Activated CD4-positive, alpha-beta memory T cell treated with anti-CD3 and anti-CD28 coated beads, Interleukin-2, amount 10 ng/mL, durations not matched to agents 7 days and 5 days (primary cell): ENCODE measurements at regions of chr1 and their contacts with region 1.

Region 1: DNA sequence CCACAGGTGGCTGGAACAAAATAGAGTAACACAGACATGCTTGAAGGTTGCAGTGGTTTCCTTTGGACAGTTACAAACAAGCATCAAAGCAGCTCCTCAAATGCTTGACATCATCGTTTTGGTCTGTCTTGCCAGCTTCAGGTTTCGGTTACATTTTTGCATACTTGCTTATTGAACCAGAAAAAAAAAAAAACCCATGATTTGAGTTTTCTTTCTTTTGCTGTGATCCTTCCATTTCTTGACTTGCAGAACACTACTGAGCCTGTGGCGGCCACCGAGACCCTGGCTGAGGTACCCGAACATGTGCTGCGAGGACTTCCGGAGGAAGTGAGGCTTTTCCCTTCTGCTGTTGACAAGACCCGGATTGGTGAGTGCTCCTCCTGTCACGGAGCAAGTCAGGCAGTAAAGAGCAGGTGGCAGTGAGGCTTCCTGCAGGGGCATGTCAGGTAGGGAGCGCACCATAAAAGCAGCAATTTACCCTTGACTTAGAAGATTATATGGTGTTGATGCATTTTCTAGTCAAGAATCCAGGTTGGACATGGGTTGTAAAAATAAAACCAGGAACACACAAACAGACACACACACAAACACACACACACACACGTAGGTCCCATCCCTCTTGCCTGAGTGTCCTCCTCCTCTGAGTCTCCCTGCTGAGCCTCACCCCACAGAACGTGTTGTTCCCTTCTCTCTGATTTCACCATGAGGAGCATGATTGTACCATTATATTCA is 30.9 kb downstream of the PRDM2 start:
- DNase-seq: peak; percentile 88
- H3K4me3 Mint-ChIP-seq: peak overlapping the region; percentile 77
- H3K27ac Mint-ChIP-seq: peak overlapping the region; percentile 99
- H3K4me1 Mint-ChIP-seq: peaks cover 69% of the 10 kb centered on the region
- H3K27me3 Mint-ChIP-seq: no peaks in the 10 kb centered on the region

Region 2: GRCh38 chr1:13699936-13700520 is 30.9 kb before region 1 on chr1 and contains the start of gene PRDM2:
- CTCF ChIA-PET with region 1: interaction called, 24 read pairs
- POLR2A ChIA-PET with region 1: interaction called, 59 read pairs
- DNase-seq: peak; percentile 64
- H3K4me3 Mint-ChIP-seq: peak within 1 kb of the TSS; percentile 94
- H3K27ac Mint-ChIP-seq: peak within 1 kb of the TSS; percentile 95
- H3K4me1 Mint-ChIP-seq: peaks cover 44% of the 10 kb centered on the region
- H3K27me3 Mint-ChIP-seq: peaks cover 2% of the 10 kb centered on the region
- total RNA-seq, gene PRDM2: 56.3 to 58.4 TPM

Region 3: DNA sequence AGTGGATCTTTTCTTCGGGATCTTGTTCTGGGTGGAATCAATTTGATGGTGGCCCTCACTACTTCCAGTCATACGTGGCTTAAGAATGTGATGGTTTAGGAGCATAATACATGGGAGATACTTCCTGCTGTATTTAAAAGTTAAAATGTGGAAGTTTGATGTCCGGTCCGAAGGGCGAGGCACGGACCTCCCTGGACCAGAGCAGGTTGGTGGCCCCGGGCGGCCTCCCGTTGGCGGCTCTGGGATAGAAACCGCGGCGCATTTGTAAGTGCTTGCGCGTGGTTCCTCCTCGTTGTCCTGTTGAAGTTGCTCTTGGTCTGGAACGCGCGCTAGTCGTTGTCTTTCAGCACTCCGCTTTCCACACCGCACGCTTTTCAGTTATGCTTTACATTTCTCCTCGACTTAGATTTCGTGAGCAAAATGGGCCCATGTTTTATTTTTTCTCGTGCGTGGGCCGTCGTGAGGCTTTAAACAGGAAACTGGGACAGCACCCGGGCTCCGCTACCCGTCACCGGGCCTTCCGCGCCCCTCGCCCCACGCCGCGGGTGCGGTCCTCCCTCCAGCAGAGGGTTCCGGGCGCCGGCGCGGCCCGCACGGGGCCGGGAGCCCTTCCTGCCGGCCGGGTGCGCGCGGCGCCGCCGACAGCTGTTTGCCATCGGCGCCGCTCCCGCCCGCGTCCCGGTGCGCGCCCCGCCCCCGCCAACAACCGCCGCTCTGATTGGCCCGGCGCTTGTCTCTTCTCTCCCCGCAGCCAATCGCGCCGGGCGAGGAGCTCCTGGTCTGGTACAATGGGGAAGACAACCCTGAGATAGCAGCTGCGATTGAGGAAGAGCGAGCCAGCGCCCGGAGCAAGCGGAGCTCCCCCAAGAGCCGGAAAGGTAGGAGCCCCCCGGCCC is 17.9 kb after region 1 on chr1:
- CTCF ChIA-PET with region 1: interaction called, 47 read pairs
- POLR2A ChIA-PET with region 1: interaction called, 177 read pairs
- DNase-seq: peak; percentile 96
- H3K4me3 Mint-ChIP-seq: peak overlapping the region; percentile 86
- H3K27ac Mint-ChIP-seq: peak overlapping the region; percentile 87
- H3K4me1 Mint-ChIP-seq: peaks cover 48% of the 10 kb centered on the region
- H3K27me3 Mint-ChIP-seq: no peaks in the 10 kb centered on the region

Region 4: GRCh38 chr1:13759088-13759487 is 28.2 kb after region 1 on chr1:
- CTCF ChIA-PET with region 1: interaction called, 5 read pairs
- POLR2A ChIA-PET with region 1: interaction called, 19 read pairs
- DNase-seq: no peak
- H3K4me3 Mint-ChIP-seq: no peak overlapping the region
- H3K27ac Mint-ChIP-seq: no peak overlapping the region
- H3K4me1 Mint-ChIP-seq: peaks cover 60% of the 10 kb centered on the region
- H3K27me3 Mint-ChIP-seq: no peaks in the 10 kb centered on the region